GM12878 (cell line): ENCODE measurements at regions of chr15 and their contacts with region 1.

Region 1: DNA sequence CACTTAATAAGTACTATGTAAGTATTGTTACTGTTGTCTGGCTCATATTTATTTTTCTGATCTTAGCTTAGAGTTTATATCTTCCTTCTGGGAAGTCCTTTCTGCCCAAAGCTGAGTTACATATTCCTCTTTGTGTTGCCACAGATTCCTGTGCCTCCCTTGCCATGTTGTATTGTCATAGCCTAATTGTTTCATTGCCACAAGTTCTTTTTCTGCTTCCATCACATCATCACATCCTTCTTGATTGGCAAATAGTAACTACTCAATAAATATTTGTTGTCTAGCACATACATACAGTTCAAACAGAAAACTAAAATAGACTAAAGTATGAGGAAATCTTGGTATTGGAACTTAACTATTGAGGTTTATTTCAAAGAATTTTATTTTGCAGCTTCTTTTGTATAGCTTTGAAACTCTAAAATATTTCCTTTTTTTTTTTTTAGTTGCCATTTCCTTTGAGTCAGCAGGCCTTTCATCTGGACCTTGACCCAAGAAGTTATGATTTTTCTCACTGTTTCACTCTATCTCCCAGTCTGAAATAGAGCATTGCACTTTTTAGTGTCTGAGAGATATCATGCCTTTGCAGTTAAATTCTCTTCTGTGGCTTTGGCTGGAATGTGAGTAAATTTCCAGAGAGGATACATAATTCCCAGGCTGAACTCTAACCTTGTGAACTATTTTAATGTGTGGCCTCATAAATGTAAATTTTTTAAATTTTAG is 98.2 kb downstream of the ZNF609 start:
- DNase-seq: no peak
- ATAC-seq: peak; percentile 79
- H3K4me3 ChIP-seq: no peak overlapping the region
- H3K27ac ChIP-seq: peak overlapping the region; percentile 7; the same call in 1 of the 2 replicates
- H3K4me1 ChIP-seq: no peaks in the 10 kb centered on the region; the same call in 1 of the 2 replicates
- H3K27me3 ChIP-seq: no peaks in the 10 kb centered on the region
- CTCF ChIP-seq: no peak
- EP300 ChIP-seq: no peak
- POLR2A ChIP-seq: no peak
- RAD21 ChIP-seq: no peak

Region 2: DNA sequence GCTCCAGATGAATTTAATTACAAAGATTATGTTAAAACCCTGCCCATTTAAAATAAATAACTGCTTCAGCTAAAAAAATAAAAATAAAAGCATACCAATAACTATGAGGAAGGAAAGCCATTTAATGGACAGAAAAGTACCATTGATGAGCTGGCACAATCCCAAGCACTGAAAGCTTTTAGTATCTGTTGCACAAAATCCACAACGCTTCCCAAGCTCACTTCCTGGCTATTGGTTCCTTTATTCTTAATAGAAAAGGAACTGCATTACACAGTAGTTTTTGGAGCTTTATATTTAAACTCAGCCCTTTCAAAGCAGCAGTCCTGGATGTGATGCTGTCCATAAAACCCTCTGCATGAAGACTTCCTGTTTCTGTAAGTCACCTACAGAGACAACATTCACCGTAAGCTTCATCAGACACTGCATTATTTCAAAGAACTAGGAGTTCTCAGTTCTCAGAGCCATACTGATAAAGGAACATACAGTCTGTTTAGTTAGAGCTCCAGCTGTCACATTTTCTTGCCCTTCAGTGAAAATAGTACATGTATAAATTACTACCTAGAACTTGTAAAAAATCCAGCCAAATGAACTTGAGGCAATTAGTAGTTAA is 284.2 kb before region 1 on chr15:
- CTCF ChIA-PET with region 1: no interaction called
- POLR2A ChIA-PET with region 1: no interaction called
- RAD21 ChIA-PET with region 1: no interaction called
- SMC1A ChIA-PET with region 1: no interaction called
- in situ Hi-C with region 1: no loop called
- intact Hi-C with region 1: no loop called
- DNase-seq: no peak
- ATAC-seq: peak; percentile 54
- H3K4me3 ChIP-seq: no peak overlapping the region
- H3K27ac ChIP-seq: no peak overlapping the region
- H3K4me1 ChIP-seq: no peaks in the 10 kb centered on the region
- H3K27me3 ChIP-seq: no peaks in the 10 kb centered on the region
- CTCF ChIP-seq: no peak
- EP300 ChIP-seq: no peak
- POLR2A ChIP-seq: no peak
- RAD21 ChIP-seq: no peak

Region 3: DNA sequence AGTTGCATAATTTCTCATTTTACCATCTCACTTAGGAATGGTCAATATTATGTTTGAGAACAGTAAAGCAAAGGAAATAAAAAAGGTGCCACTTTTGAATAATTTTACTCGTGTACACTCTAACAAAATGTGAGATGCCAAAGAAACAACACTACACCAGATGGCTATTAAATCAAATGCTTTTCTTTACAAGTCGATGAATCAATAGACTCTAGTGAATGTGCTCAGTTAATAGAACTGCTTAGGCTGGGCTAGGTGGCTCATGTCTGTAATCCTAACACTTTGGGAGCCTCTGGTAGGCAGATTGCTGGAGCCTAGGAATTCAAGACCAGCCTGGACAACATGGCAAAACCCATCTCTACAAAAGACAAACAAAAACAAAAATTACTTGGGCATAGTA is 10.4 kb before region 1 on chr15:
- CTCF ChIA-PET with region 1: interaction called, 14 read pairs
- POLR2A ChIA-PET with region 1: interaction called, 3 read pairs
- RAD21 ChIA-PET with region 1: interaction called, 4 read pairs
- SMC1A ChIA-PET with region 1: interaction called, 5 read pairs
- in situ Hi-C with region 1: no loop called
- intact Hi-C with region 1: no loop called
- DNase-seq: no peak
- ATAC-seq: no peak
- H3K4me3 ChIP-seq: no peak overlapping the region
- H3K27ac ChIP-seq: no peak overlapping the region
- H3K4me1 ChIP-seq: 0 out of 2 replicates have a peak, but pooled peaks cover 3% of the 10 kb centered on the region
- H3K27me3 ChIP-seq: no peaks in the 10 kb centered on the region
- CTCF ChIP-seq: no peak
- EP300 ChIP-seq: no peak
- POLR2A ChIP-seq: no peak
- RAD21 ChIP-seq: no peak

Region 4: GRCh38 chr15:64571857-64572291 is 13.3 kb after region 1 on chr15:
- CTCF ChIA-PET with region 1: interaction called, 10 read pairs
- POLR2A ChIA-PET with region 1: interaction called, 5 read pairs
- RAD21 ChIA-PET with region 1: interaction called, 12 read pairs
- SMC1A ChIA-PET with region 1: interaction called, 25 read pairs
- in situ Hi-C with region 1: no loop called
- intact Hi-C with region 1: no loop called
- DNase-seq: peak; percentile 92
- ATAC-seq: peak; percentile 83
- H3K4me3 ChIP-seq: no peak overlapping the region
- H3K27ac ChIP-seq: peak overlapping the region; percentile 75
- H3K4me1 ChIP-seq: peaks cover 43% of the 10 kb centered on the region
- H3K27me3 ChIP-seq: no peaks in the 10 kb centered on the region
- CTCF ChIP-seq: no peak
- EP300 ChIP-seq: 0 out of 4 replicates have a peak, but pooled peaks of 1 of the 2 experiments have one; percentile 29
- POLR2A ChIP-seq: no peak
- RAD21 ChIP-seq: no peak

Region 5: DNA sequence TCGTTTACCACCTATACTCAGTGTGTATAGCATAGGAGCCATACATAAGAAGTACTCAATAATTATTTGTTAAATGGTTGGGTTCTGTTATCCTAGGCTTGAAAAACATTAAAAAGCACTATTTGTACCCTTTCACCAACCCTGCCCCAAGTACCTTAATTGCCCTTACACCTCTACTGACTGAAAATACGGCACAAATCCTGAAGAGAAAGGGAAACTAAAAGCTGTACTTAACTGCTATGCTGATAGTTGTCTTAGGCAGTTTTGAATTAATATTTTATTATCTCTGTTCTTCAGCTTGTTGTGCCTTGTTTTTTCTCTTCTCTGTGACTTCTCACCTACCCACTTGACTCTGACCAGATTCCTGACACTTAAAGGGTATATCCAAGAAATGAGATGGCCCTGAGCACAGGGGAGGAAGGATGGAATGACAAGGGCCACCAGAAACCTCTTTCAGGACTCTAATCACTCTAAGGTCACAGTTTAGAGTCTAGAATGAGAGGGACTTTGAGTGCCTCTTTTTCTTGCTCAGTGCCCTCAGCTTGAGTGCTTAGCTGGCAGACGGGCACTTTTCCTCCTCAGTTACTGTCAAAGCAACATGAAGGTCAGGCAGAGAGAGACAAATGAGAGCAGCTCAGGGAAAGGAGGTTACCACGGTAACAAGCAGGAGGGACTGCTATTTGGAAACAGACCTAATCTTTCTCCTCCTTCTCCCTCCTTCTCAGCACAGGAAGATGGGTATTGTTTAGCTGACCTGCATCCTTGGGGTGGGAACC is 38.3 kb after region 1 on chr15:
- CTCF ChIA-PET with region 1: interaction called, 3 read pairs
- POLR2A ChIA-PET with region 1: no interaction called
- RAD21 ChIA-PET with region 1: interaction called, 10 read pairs
- SMC1A ChIA-PET with region 1: interaction called, 3 read pairs
- in situ Hi-C with region 1: no loop called
- intact Hi-C with region 1: no loop called
- DNase-seq: no peak
- ATAC-seq: peak; percentile 79
- H3K4me3 ChIP-seq: peak overlapping the region; percentile 53
- H3K27ac ChIP-seq: peak overlapping the region; percentile 74
- H3K4me1 ChIP-seq: peaks cover 10% of the 10 kb centered on the region
- H3K27me3 ChIP-seq: no peaks in the 10 kb centered on the region
- CTCF ChIP-seq: no peak
- EP300 ChIP-seq: no peak
- POLR2A ChIP-seq: no peak
- RAD21 ChIP-seq: no peak

Region 6: DNA sequence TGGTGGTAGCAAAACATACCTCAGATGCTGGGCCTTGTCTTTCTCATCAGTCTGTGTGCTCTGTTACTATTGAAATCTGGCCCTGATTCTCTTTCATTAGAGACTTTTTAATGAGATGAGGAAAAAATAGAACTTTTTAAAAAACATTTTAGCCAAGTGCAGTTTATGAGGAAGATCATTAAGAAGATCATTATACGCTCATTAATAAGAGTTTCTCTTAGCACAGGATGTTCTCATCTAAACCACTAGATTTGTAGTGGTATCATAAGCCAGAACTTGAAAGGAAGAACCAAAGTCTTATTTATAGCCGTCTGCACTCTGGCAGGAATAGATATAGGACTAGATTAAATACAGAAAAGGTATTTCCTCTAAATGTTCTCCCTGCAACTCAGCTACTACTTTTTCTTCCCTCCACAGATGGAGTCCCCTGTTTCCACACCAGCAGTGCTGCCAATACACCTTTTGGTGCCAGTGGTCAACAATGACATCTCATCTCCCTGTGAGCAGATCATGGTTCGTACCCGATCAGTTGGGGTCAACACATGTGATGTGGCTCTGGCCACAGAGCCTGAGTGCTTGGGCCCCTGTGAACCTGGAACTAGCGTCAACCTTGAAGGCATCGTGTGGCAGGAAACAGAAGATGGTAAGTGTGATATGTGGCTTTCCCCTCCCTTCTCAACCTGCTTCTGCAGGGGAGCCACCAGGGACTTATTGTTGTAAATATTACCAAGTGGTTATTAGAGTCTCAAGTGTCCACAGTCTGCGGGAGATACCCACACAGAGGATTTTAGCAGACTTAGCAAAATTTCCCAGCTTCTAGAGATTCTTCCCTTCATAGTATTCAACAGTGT is 64.0 kb after region 1 on chr15:
- CTCF ChIA-PET with region 1: no interaction called
- POLR2A ChIA-PET with region 1: no interaction called
- RAD21 ChIA-PET with region 1: interaction called, 4 read pairs
- SMC1A ChIA-PET with region 1: interaction called, 10 read pairs
- in situ Hi-C with region 1: no loop called
- intact Hi-C with region 1: no loop called
- DNase-seq: peak; percentile 96
- ATAC-seq: peak; percentile 93
- H3K4me3 ChIP-seq: no peak overlapping the region
- H3K27ac ChIP-seq: peak overlapping the region; percentile 90
- H3K4me1 ChIP-seq: peaks cover 55% of the 10 kb centered on the region
- H3K27me3 ChIP-seq: no peaks in the 10 kb centered on the region
- CTCF ChIP-seq: no peak
- EP300 ChIP-seq: peak; percentile 69 to 74
- POLR2A ChIP-seq: no peak
- RAD21 ChIP-seq: no peak